ENCODE measurements at regions of chrX and their contacts with region 1.

Region 1: GRCh38 chrX:102659790-102660757 is 8.8 kb downstream of the GPRASP1 start:
- DNase-seq: peak; percentile 70
- ATAC-seq: peak; percentile 95
- H3K4me3 Mint-ChIP-seq: peak overlapping the region; percentile 92
- H3K27ac Mint-ChIP-seq: peak overlapping the region; percentile 92
- H3K4me1 Mint-ChIP-seq: peaks cover 17% of the 10 kb centered on the region
- H3K27me3 Mint-ChIP-seq: no peaks in the 10 kb centered on the region
- CTCF ChIP-seq: no peak

Region 2: GRCh38 chrX:102155806-102156179 is 504.3 kb before region 1 on chrX and contains the start of gene BEX5:
- CTCF ChIA-PET with region 1: no interaction called
- POLR2A ChIA-PET with region 1: no interaction called
- intact Hi-C with region 1: loop called (anchors 5 kb)
- DNase-seq: peak; percentile 15
- ATAC-seq: peak; percentile 96
- H3K4me3 Mint-ChIP-seq: peak within 1 kb of the TSS; percentile 89
- H3K27ac Mint-ChIP-seq: peak within 1 kb of the TSS; percentile 75
- H3K4me1 Mint-ChIP-seq: peaks cover 16% of the 10 kb centered on the region
- H3K27me3 Mint-ChIP-seq: peaks cover 4% of the 10 kb centered on the region
- CTCF ChIP-seq: no peak
- total RNA-seq, gene BEX5: 0.61 and 1.2 TPM in 2 replicates

Region 3: DNA sequence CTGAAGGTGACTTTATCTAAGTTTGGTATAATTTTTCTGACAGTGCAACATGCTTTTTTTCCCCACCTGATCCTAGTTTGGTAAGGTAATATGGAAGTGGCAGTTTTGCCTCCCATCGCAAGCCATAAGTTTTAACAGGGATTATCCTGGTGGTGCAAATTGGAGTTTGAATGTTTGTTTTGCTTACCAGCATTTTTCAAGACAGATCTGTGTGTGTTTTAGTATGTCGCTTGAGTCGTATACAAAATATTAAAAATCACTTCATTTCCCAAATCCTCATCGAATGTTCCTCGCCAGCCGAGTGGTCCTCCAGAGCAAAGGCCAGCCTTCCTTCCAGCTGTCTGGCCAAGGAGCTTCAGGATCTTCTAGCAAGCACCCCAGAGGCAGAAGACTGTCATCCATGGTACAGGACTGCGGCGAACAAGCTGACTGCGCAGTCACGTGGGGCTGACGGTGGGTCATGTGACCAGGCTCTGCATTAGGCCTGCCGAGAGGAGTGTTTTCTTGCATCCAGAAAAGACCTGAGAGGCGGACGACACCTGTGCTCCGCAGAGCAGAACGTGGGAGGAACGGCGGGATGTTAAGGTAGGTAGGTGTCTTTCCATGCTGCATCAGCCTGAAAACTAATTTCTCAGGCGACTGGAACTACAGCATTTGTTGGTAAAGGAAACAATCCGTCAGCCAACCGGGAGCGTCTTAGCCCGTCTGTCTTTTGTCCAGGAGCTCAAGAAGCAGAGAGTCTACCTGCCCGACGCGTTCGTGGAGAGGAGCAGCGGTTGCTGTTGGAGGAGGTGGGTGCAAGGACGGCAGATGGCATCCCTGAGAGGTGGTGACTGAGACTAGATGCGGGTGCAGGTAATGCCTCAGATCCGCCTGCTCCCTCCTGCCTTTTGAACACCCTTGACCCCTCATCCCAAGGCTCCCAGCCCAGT is 60.4 kb after region 1 on chrX and contains the start of gene GPRASP3:
- CTCF ChIA-PET with region 1: no interaction called
- POLR2A ChIA-PET with region 1: interaction called, 4 read pairs
- intact Hi-C with region 1: loop called (anchors 5 kb)
- DNase-seq: peak; percentile 37
- ATAC-seq: peak; percentile 85
- H3K4me3 Mint-ChIP-seq: peak within 1 kb of the TSS; percentile 88
- H3K27ac Mint-ChIP-seq: peak within 1 kb of the TSS; percentile 35
- H3K4me1 Mint-ChIP-seq: peaks cover 12% of the 10 kb centered on the region
- H3K27me3 Mint-ChIP-seq: no peaks in the 10 kb centered on the region
- CTCF ChIP-seq: no peak
- total RNA-seq, gene GPRASP3: 1.3 TPM in 2 replicates